ENCODE measurements at regions of chr12 and their contacts with region 1.

Region 1: GRCh38 chr12:47071241-47071852 is 8.1 kb upstream of the PCED1B start:
- DNase-seq: no peak
- ATAC-seq: peak; percentile 42
- H3K4me3 Mint-ChIP-seq: no peak overlapping the region
- H3K27ac Mint-ChIP-seq: no peak overlapping the region
- H3K4me1 Mint-ChIP-seq: peaks cover 11% of the 10 kb centered on the region
- H3K27me3 Mint-ChIP-seq: no peaks in the 10 kb centered on the region

Region 2: DNA sequence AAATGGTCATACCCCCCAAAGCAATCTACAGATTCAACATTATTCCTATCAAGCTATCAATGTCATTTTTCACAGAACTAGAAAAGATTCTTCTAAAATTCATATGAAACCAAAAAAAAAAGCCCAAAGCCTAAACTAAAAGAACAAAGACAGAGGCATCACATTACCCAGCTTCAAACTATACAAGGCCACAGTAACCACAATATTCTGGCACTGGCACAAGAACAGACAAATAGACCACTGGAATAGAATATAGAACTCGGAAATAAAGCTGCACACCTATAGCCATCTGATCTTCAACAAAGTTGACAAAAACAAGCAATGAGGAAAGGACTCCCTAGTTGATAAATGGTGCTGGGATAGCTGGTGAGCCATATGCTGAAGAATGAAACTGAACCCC is 81.1 kb before region 1 on chr12:
- CTCF ChIA-PET with region 1: no interaction called
- POLR2A ChIA-PET with region 1: no interaction called
- DNase-seq: no peak
- ATAC-seq: no peak
- H3K4me3 Mint-ChIP-seq: no peak overlapping the region
- H3K27ac Mint-ChIP-seq: no peak overlapping the region
- H3K4me1 Mint-ChIP-seq: no peaks in the 10 kb centered on the region
- H3K27me3 Mint-ChIP-seq: peaks cover 13% of the 10 kb centered on the region

Region 3: DNA sequence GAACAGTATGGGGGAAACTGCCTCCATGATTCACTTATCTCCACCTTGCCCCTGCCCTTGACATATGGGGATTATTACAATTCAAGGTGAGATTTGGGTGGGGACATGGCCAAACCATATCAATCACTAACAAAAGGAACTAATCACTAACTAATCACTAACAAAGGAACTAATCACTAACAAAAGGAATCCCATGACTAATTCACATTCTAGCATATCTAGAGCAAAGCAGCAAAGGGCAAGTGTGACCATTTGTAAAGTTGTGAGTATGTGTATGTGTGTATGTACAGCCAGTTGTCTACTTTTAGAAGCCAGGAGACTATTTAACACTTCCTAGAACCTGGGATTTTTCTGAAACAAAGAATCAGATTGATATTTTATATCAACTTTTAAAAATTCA is 22.8 kb before region 1 on chr12:
- CTCF ChIA-PET with region 1: interaction called, 15 read pairs
- POLR2A ChIA-PET with region 1: no interaction called
- DNase-seq: no peak
- ATAC-seq: no peak
- H3K4me3 Mint-ChIP-seq: no peak overlapping the region
- H3K27ac Mint-ChIP-seq: no peak overlapping the region
- H3K4me1 Mint-ChIP-seq: no peaks in the 10 kb centered on the region
- H3K27me3 Mint-ChIP-seq: peaks cover 6% of the 10 kb centered on the region

Region 4: DNA sequence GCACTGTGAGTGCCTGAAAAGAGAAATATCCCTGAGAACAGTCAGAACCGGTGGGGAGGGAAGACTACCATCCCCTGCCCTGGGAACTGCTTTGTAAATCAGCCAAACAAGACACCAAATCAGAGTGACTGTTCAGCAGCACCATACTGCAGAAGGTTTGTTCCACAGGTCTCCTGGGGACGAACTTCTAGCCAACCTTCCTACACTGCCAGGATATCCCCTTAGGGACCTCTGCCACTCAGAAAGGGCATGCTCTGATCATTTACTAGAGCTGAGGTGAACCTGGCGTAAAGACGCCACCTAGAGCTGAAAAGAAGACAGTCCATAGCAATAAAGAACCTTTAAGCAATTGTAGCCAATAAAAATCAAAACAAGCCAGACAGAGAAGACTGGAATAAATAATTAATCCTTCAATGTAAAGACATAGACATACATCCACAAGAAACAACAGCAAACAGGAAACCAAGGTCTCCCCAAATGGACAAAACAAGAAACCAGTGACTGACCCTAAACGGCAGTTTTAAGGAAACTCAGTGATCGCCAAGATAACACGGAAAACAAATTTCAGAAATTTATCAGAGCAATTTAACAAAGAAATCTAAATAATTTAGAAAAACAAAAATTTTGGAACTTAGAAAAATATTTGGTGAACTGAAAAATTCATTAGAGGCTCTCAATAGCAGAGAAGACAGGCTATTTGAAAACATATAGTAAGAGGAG is 236.5 kb after region 1 on chr12:
- CTCF ChIA-PET with region 1: interaction called, 15 read pairs
- POLR2A ChIA-PET with region 1: no interaction called
- DNase-seq: peak; percentile 76
- ATAC-seq: peak; percentile 92
- H3K4me3 Mint-ChIP-seq: peak overlapping the region; percentile 64
- H3K27ac Mint-ChIP-seq: peak overlapping the region; percentile 77
- H3K4me1 Mint-ChIP-seq: peaks cover 59% of the 10 kb centered on the region
- H3K27me3 Mint-ChIP-seq: no peaks in the 10 kb centered on the region